ENCODE measurements at regions of chr5 and their contacts with region 1.

Region 1: GRCh38 chr5:140261403-140262171 is 41.3 kb downstream of the PFDN1 start:
- DNase-seq: no peak

Region 2: GRCh38 chr5:139903795-139904565 is 357.6 kb before region 1 on chr5:
- in situ Hi-C with region 1: no loop called
- DNase-seq: peak; percentile 26

Region 3: DNA sequence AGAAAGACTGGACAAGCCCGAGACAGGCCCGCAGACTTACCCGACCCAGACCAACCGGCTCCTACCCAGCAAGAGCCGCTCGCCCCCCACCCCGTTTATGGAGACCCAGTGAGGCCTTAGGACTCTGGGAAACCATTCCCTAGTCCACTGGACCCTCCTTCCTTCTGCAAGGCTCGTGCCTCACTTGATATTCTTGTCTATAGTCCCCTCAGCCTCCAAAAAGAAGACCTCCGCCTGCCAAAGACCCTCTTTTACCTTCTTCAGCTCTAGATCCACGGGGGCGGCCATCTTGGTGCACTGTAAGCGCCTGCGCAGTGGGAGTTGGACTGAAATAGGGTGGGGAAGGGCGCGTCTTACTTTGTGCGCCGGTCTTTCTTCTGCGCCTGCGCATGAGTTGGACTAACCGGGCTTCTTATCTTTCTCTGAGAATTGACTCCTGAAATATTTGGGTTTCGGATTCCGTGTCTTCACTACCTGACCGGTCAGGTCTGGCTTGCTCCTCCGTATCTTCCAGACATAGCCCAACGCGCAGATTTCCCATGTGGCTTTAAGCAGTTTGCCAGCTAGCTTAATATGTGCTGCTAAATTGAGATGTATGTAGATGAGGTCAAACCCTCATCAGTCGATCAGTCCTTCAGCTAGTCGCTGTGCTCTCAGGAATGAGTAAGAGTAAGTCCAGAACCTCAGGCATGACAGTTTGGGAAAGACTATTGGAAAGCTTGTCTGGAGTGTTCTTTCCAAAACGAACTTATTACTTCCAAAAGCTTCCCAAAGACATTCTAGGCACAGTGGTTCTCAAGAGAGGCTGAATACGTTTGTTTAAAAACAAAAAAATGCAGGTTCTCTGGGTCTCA is 41.4 kb after region 1 on chr5 and contains the start of gene PFDN1:
- in situ Hi-C with region 1: loop called (anchors 5 kb)
- DNase-seq: peak; percentile 96
- total RNA-seq, gene PFDN1: 266 and 273 TPM in 2 replicates